Lower leg skin (tissue), 4 donors: ENCODE measurements at regions of chr15 and their contacts with region 1.

Region 1: GRCh38 chr15:100572362-100572983 is 29.5 kb downstream of the LINS1 start:
- DNase-seq: no peak
- H3K4me3 ChIP-seq: no peak overlapping the region
- CTCF ChIP-seq: no peak
- POLR2A ChIP-seq: no peak

Region 2: DNA sequence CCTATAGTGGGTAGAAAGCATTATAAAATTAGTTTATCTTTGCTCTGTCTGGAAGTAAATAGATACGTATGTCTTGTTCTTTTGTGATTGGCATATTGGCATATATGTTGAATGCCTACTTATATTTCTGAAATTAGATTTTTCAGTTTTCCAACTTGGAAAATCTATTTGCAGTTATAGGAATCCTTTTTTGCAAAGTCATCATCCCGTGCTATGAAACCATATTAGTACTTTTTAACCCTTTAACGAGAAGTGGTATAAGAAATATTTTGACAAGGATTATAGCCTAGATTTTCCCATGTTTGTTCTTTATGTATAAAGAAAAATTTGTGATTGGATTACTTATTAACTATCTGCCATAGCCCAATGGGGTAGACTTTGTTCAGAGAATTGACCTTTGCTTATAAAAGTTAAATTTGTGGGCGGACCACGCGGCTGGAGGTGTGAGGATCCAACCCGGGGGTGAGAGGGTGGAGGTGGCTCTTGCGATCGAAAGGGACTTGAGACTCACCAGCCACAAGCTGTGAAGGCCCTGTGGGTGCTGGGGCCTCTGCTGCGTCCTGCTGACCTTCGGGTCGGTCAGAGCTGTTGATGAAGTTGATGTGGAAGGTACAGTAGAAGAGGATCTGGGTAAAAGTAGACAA is 1315.2 kb before region 1 on chr15:
- intact Hi-C with region 1: loop called (anchors 5 kb)
- DNase-seq: no peak
- H3K4me3 ChIP-seq: no peak overlapping the region
- CTCF ChIP-seq: no peak
- POLR2A ChIP-seq: no peak